WTC11 (cell line): ENCODE measurements at regions of chr7 and their contacts with region 1.

Region 1: DNA sequence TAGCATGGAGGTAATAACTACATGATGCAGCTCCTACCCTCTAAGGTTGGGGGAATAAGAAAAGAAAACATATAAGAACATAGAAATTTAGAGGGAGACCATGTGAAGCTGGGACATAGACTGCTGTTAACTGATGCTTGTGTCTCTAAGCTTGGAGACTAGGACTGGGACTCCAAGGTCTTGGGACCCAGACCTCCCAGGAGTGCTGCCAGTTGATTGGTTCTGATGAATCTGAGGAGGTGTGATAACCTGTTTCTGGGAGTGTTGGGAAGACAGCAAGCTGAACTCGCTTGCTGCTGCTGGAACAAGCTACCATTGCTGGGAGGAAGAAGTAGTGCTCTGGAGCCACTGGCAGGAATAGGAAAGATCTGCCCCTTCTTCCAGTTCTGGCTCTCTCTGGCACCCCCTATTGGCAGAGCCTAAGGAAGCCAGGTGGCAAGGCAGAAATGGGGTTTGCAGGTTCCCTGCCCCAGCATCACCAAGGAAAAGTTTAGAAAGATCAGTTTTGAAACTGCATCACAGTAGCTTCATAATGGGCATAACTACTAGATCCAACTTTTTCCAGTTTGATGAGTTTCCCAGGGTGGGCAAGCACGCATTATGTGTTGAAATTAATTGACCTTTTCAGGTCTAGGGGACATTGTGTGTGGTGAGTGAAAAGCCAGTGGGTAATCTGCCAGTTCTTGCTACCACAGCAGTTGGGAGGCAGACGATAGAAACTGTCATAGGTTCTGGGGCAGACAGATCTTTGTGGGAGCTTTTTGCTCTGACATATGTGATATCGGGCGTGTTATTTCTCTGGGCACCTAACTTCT is 140.7 kb downstream of the SND1 start:
- DNase-seq: peak; percentile 84
- ATAC-seq: peak; percentile 93
- H3K4me3 Mint-ChIP-seq: no peak overlapping the region
- H3K27ac Mint-ChIP-seq: peak overlapping the region; percentile 13
- H3K4me1 Mint-ChIP-seq: peaks cover 47% of the 10 kb centered on the region
- H3K27me3 Mint-ChIP-seq: no peaks in the 10 kb centered on the region
- CTCF ChIP-seq: peak; percentile 78

Region 2: GRCh38 chr7:127730658-127731276 is 62.0 kb before region 1 on chr7:
- CTCF ChIA-PET with region 1: interaction called, 11 read pairs
- POLR2A ChIA-PET with region 1: no interaction called
- DNase-seq: no peak
- ATAC-seq: peak; percentile 50
- H3K4me3 Mint-ChIP-seq: no peak overlapping the region
- H3K27ac Mint-ChIP-seq: no peak overlapping the region
- H3K4me1 Mint-ChIP-seq: peaks cover 46% of the 10 kb centered on the region
- H3K27me3 Mint-ChIP-seq: no peaks in the 10 kb centered on the region
- CTCF ChIP-seq: no peak

Region 3: DNA sequence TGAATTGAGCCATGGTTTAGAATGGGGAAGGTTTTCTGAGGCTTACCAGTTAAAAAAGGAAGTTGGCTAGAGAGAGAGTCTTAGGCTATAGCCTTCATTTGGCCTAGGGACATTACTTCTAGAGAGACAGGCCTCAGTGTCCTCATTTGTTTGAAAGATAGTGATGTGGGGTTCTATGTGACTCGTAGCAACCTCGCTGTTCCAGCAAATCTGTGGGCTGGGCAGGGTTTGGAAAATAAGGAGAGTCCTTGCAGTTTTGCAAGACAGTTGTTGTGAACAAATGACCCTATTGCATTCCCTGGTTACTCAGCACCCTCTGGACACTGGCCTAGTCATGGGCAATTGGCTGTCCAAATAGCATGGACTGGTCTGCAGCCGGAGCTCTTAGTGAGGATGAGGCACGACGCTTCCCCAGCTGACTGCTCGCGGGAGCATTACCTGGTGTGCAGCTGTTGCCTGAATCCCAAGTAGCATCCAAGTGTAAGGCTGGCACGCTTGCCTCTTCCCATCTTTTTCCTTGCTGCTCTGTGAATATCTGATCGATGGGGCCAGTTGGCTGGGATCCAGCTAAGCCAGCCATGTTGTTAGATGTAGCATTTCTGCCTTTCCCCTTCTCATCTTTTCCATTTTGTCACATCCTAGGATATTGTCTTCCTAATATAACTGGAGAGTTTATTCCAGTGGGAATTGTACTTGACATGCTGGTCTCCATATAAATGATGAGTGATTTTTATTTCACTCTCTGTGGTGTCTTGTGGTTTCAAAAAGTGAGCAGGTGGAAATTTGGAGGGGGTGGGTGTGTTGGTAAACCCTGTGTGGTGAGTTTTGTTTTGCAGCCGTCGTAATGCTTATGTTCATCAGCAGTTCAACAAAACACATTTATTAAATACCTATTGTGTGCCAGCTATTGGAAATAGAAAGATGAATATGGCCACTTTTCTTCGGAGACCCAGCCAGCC is 41.0 kb before region 1 on chr7:
- CTCF ChIA-PET with region 1: interaction called, 11 read pairs
- POLR2A ChIA-PET with region 1: no interaction called
- DNase-seq: no peak
- ATAC-seq: no peak
- H3K4me3 Mint-ChIP-seq: no peak overlapping the region
- H3K27ac Mint-ChIP-seq: no peak overlapping the region
- H3K4me1 Mint-ChIP-seq: peaks cover 59% of the 10 kb centered on the region
- H3K27me3 Mint-ChIP-seq: no peaks in the 10 kb centered on the region
- CTCF ChIP-seq: no peak

Region 4: DNA sequence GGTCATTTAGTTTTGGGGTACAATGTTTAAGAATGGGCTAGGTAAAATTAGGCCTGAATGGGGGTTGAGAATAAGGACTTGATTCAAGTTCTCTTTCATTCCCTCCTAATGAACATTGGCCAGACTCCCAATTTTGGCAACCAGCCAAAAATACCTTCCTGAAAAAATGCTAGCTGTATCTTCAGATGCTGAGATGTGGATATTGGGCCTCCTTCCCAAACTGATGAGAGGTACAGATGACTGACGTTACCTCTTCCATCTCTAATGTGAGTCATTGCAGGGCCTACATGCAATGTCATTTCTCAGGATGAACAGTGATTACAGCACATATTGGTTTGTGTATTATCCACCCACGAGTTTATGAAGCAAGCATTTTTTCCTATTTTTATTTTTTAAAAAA is 10.9 kb after region 1 on chr7:
- CTCF ChIA-PET with region 1: interaction called, 19 read pairs
- POLR2A ChIA-PET with region 1: no interaction called
- DNase-seq: no peak
- ATAC-seq: no peak
- H3K4me3 Mint-ChIP-seq: no peak overlapping the region
- H3K27ac Mint-ChIP-seq: no peak overlapping the region
- H3K4me1 Mint-ChIP-seq: peaks cover 47% of the 10 kb centered on the region
- H3K27me3 Mint-ChIP-seq: no peaks in the 10 kb centered on the region
- CTCF ChIP-seq: no peak

Region 5: DNA sequence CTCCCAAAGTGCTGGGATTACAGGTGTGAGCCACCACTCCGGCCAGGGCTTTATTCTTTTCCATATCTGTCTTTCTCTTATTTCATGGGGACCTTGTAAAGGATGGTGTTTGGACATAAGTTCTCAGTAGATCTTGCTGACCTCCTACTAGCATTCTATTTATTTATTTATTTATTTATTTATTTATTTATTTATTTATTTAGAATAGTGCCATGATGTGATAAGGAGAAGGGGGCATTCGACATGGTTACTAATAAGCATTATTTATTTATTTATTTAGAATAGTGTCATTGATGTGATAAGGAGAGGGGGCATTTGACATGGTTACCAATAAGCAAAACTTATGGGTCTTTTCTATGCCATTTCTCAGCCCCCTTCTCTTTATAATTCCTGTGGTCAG is 61.6 kb after region 1 on chr7:
- CTCF ChIA-PET with region 1: interaction called, 11 read pairs
- POLR2A ChIA-PET with region 1: no interaction called
- DNase-seq: no peak
- ATAC-seq: no peak
- H3K4me3 Mint-ChIP-seq: no peak overlapping the region
- H3K27ac Mint-ChIP-seq: no peak overlapping the region
- H3K4me1 Mint-ChIP-seq: peaks cover 30% of the 10 kb centered on the region
- H3K27me3 Mint-ChIP-seq: no peaks in the 10 kb centered on the region
- CTCF ChIP-seq: no peak

Region 6: GRCh38 chr7:128031901-128032604 is 239.3 kb after region 1 on chr7:
- CTCF ChIA-PET with region 1: interaction called, 10 read pairs
- POLR2A ChIA-PET with region 1: interaction called, 3 read pairs
- DNase-seq: peak; percentile 56
- ATAC-seq: peak; percentile 29
- H3K4me3 Mint-ChIP-seq: peak overlapping the region; percentile 74
- H3K27ac Mint-ChIP-seq: no peak overlapping the region
- H3K4me1 Mint-ChIP-seq: peaks cover 33% of the 10 kb centered on the region
- H3K27me3 Mint-ChIP-seq: peaks cover 38% of the 10 kb centered on the region
- CTCF ChIP-seq: no peak